Activated CD8-positive, alpha-beta T cell treated with anti-CD3 and anti-CD28 coated beads for 36 hours (primary cell): ENCODE measurements at regions of chr5 and their contacts with region 1.

Region 1: GRCh38 chr5:143002459-143003328 is 232.5 kb downstream of the ARHGAP26 start:
- DNase-seq: peak; percentile 89
- ATAC-seq: peak; percentile 88
- H3K4me3 Mint-ChIP-seq: peak overlapping the region; percentile 63
- H3K27ac Mint-ChIP-seq: peak overlapping the region; percentile 100
- H3K4me1 Mint-ChIP-seq: peaks cover 86% of the 10 kb centered on the region
- H3K27me3 Mint-ChIP-seq: no peaks in the 10 kb centered on the region
- CTCF ChIP-seq: peak; percentile 79

Region 2: GRCh38 chr5:142922223-142922952 is 80.3 kb before region 1 on chr5:
- CTCF ChIA-PET with region 1: interaction called, 9 read pairs
- POLR2A ChIA-PET with region 1: no interaction called
- intact Hi-C with region 1: loop called (anchors 10 kb)
- DNase-seq: no peak
- ATAC-seq: no peak
- H3K4me3 Mint-ChIP-seq: no peak overlapping the region
- H3K27ac Mint-ChIP-seq: peak overlapping the region; percentile 26
- H3K4me1 Mint-ChIP-seq: peaks cover 37% of the 10 kb centered on the region
- H3K27me3 Mint-ChIP-seq: no peaks in the 10 kb centered on the region
- CTCF ChIP-seq: peak; percentile 41

Region 3: GRCh38 chr5:142938266-142938880 is 64.3 kb before region 1 on chr5:
- CTCF ChIA-PET with region 1: no interaction called
- POLR2A ChIA-PET with region 1: no interaction called
- intact Hi-C with region 1: no loop called
- DNase-seq: no peak
- ATAC-seq: no peak
- H3K4me3 Mint-ChIP-seq: no peak overlapping the region
- H3K27ac Mint-ChIP-seq: no peak overlapping the region
- H3K4me1 Mint-ChIP-seq: peaks cover 40% of the 10 kb centered on the region
- H3K27me3 Mint-ChIP-seq: no peaks in the 10 kb centered on the region
- CTCF ChIP-seq: no peak

Region 4: GRCh38 chr5:143051244-143052058 is 48.8 kb after region 1 on chr5:
- CTCF ChIA-PET with region 1: no interaction called
- POLR2A ChIA-PET with region 1: no interaction called
- intact Hi-C with region 1: loop called (anchors 10 kb)
- DNase-seq: no peak
- ATAC-seq: no peak
- H3K4me3 Mint-ChIP-seq: no peak overlapping the region
- H3K27ac Mint-ChIP-seq: no peak overlapping the region
- H3K4me1 Mint-ChIP-seq: peaks cover 63% of the 10 kb centered on the region
- H3K27me3 Mint-ChIP-seq: no peaks in the 10 kb centered on the region
- CTCF ChIP-seq: no peak

Region 5: DNA sequence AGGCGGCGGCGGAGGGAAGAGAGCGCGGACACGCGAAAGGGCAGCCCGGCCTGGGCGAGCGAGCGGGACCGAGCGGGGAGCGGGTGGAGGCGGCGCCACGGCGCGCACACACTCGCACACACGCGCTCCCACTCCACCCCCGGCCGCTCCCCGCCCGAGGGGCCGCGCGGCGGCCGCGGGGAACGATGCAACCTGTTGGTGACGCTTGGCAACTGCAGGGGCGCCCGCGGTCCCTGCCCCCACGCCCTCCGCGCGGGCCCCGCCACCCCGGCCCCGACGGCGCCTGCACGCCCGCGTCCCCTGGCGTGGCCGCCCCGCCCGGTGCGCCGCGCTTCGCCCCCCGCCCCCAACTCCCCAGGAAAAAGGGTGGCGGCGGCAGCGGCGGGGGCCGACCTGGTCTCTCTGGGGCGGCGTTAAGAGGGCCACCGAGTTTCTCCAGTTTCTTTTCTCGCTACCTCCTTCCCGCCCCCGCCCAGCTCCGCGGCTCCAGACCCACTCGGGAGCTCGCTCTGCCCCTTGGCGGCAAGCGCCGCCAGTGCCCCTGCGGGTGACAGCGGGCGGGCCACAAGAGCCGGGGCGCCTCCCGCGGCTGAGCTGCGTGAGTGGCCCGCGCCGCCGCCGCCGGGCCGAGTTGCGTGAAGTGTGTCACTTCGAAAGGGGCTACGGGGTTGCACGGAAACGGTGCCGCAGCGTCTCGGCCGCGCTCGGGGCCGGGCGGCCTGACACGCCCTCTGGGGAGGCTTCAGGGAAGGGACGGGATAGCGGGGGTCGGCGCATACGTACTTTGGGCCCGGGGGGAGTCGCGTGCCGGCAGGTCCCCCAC is 401.1 kb after region 1 on chr5 and contains the start of gene NR3C1:
- CTCF ChIA-PET with region 1: interaction called, 12 read pairs
- POLR2A ChIA-PET with region 1: interaction called, 16 read pairs
- intact Hi-C with region 1: no loop called
- DNase-seq: peak; percentile 86
- ATAC-seq: peak; percentile 65
- H3K4me3 Mint-ChIP-seq: peak within 1 kb of the TSS; percentile 93
- H3K27ac Mint-ChIP-seq: peak within 1 kb of the TSS; percentile 95
- H3K4me1 Mint-ChIP-seq: peaks cover 42% of the 10 kb centered on the region
- H3K27me3 Mint-ChIP-seq: no peaks in the 10 kb centered on the region
- CTCF ChIP-seq: peak; percentile 71
- total RNA-seq, gene NR3C1: 52.7 to 55.6 TPM

Region 6: GRCh38 chr5:143693651-143694252 is 691.1 kb after region 1 on chr5:
- CTCF ChIA-PET with region 1: no interaction called
- POLR2A ChIA-PET with region 1: no interaction called
- intact Hi-C with region 1: loop called (anchors 10 kb)
- DNase-seq: peak; percentile 12
- ATAC-seq: peak; percentile 74
- H3K4me3 Mint-ChIP-seq: no peak overlapping the region
- H3K27ac Mint-ChIP-seq: peak overlapping the region; percentile 40
- H3K4me1 Mint-ChIP-seq: peaks cover 42% of the 10 kb centered on the region
- H3K27me3 Mint-ChIP-seq: peaks cover 4% of the 10 kb centered on the region
- CTCF ChIP-seq: no peak

Region 7: DNA sequence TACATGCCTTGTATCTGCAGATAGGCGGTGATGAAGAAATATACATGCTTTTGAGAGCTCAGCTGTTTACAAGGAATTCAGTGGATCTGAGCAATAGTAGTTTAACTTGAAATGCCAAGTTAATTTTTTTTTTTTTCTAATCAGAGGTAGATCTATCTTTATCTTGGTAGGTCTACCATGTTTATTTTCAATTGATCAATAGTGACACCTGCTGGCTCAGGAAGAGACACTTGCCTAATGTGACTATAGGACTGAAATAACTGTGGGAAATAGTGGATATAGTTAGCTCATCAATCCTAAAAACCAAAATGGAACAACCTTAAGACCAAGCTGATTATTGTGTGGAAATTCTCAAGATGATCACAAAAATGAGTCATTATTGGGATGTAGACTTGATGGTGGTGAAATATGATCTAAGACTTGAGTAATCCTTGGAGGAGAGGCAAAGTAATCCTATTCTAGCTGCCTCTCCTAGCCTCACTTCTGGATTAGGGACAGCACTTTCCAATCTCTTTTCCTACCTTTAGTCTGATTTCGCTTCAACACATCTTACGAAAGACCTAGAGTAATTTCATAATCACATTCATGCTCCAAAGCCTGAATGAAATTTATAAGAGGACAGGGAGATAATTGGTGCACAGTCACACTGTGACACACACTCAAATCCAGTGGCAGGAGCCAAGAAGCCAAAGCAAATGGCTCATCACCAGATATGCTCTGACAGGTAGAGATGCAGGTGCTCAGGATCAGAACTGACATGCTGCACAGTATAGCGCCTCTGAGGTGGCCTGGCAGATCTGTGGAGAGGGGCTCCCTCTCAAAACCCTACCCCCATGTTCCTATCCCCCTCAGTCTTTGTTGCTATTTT is 965.6 kb after region 1 on chr5:
- CTCF ChIA-PET with region 1: interaction called, 3 read pairs
- POLR2A ChIA-PET with region 1: no interaction called
- intact Hi-C with region 1: loop called (anchors 10 kb)
- DNase-seq: no peak
- ATAC-seq: peak; percentile 42
- H3K4me3 Mint-ChIP-seq: no peak overlapping the region
- H3K27ac Mint-ChIP-seq: no peak overlapping the region
- H3K4me1 Mint-ChIP-seq: no peaks in the 10 kb centered on the region
- H3K27me3 Mint-ChIP-seq: peaks cover 11% of the 10 kb centered on the region
- CTCF ChIP-seq: peak; percentile 71